K562 (cell line): ENCODE measurements at regions of chr20 and their contacts with region 1.

Region 1: GRCh38 chr20:23687986-23688385 is 852 bp downstream of the CST4 start:
- DNase-seq: no peak
- ATAC-seq: no peak
- H3K4me3 ChIP-seq: no peak overlapping the region
- H3K27ac ChIP-seq: no peak overlapping the region
- H3K4me1 ChIP-seq: no peaks in the 10 kb centered on the region
- H3K27me3 ChIP-seq: no peaks in the 10 kb centered on the region
- CTCF ChIP-seq: no peak
- EP300 ChIP-seq: no peak
- POLR2A ChIP-seq: no peak
- RAD21 ChIP-seq: no peak

Region 2: DNA sequence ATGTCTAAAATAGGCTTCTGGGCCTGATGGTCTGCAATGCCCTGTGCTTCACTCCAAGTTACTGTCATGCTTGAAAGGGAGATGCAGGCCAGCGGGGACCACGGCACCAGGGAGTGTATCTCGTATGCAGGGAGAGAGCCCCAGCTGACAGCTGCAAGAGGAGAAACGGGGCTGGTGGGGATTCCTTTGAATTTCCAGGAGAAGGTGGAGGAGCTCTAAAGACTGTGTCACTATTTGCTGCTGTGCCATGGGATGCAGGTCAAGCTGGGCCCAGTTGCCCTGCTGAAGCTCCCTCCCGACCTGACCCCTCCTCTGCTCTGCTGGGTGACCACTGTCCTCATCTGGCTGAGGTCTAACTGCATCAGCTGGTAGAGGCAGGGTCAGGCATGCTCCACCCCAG is 61.8 kb after region 1 on chr20:
- CTCF ChIA-PET with region 1: no interaction called
- POLR2A ChIA-PET with region 1: no interaction called
- in situ Hi-C with region 1: no loop called
- intact Hi-C with region 1: loop called (anchors 2 kb)
- DNase-seq: no peak
- ATAC-seq: no peak
- H3K4me3 ChIP-seq: no peak overlapping the region
- H3K27ac ChIP-seq: no peak overlapping the region
- H3K4me1 ChIP-seq: no peaks in the 10 kb centered on the region
- H3K27me3 ChIP-seq: no peaks in the 10 kb centered on the region
- CTCF ChIP-seq: no peak
- EP300 ChIP-seq: no peak
- POLR2A ChIP-seq: no peak
- RAD21 ChIP-seq: no peak